ENCODE measurements at regions of chr17 and their contacts with region 1.

Region 1: GRCh38 chr17:12940699-12941098 is 77.1 kb downstream of the ELAC2 start:
- DNase-seq: no peak
- H3K4me3 ChIP-seq: no peak overlapping the region
- H3K27ac ChIP-seq: no peak overlapping the region
- H3K4me1 ChIP-seq: no peaks in the 10 kb centered on the region
- H3K27me3 ChIP-seq: peaks cover 34% of the 10 kb centered on the region
- CTCF ChIP-seq: no peak

Region 2: DNA sequence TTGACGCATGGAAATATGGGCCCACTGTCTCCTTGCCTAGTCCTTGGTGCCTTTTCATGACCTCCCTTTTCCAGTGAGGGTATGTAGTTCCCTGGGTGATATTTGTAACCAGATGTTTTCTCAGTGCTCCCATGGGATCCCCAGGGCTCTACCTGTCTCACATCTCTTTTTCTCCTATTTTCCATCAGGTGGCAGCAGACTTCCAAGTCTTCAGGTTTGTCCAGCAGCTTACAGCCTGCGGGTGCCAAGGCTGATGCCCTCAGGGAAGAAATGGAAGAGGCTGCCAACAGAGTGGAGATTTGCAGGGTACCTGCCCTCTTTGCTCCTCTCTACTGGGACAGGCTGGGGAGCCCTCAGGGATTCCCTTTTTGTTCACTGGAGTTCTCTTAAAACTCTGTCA is 12.0 kb before region 1 on chr17:
- CTCF ChIA-PET with region 1: no interaction called
- POLR2A ChIA-PET with region 1: interaction called, 11 read pairs
- intact Hi-C with region 1: no loop called
- DNase-seq: no peak
- H3K4me3 ChIP-seq: no peak overlapping the region
- H3K27ac ChIP-seq: no peak overlapping the region
- H3K4me1 ChIP-seq: no peaks in the 10 kb centered on the region
- H3K27me3 ChIP-seq: peaks cover 36% of the 10 kb centered on the region; the same call in 1 of the 2 replicates
- CTCF ChIP-seq: no peak; the same call in 1 of the 2 replicates

Region 3: DNA sequence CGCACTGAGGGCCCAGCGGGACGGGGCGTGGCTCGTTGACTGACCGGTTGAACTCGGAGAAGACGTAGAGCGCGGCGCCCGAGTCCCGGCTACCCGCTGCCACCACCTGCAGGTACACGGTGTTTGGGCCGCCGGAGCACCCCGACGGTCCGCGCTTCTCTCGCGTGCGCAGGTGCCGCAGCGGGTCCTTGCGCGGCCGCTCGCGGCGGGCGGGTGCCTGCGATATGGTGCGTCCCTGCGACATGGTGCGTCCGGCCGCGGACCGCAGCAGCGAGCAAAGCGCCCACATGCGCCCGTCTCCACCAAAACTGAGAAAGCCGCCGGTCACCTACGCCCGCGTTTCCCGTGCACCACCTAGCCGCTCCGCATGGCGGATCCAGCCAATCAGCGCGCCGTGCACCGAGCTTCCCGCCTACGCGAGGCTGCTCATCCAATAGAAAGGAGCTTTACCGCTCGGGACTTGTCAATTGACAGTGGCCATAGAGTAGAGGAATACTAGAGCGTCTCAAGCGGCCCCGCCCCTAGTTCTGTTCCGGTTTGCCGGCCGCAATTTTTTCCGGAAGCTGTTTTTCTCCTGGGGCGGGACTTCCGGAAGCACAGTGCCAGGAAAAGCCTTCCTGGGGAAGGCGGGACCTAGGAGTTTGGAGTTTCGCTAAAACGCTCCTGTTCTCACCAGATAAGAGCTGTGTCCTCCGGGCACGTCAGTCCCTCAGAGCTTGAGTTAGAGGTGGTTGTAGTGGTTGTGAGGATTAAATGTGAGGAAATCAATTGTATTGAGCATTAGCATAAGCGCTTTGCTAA is 77.2 kb after region 1 on chr17 and contains the start of gene ELAC2:
- CTCF ChIA-PET with region 1: no interaction called
- POLR2A ChIA-PET with region 1: no interaction called
- intact Hi-C with region 1: no loop called
- DNase-seq: peak; percentile 94 to 97
- H3K4me3 ChIP-seq: peak within 1 kb of the TSS; percentile 90
- H3K27ac ChIP-seq: peak within 1 kb of the TSS; percentile 65
- H3K4me1 ChIP-seq: peaks cover 6% of the 10 kb centered on the region; the same call in 1 of the 2 replicates
- H3K27me3 ChIP-seq: peaks cover 6% of the 10 kb centered on the region
- CTCF ChIP-seq: no peak
- total RNA-seq, gene ELAC2: 58.4 and 62.7 TPM in 2 replicates

Measured in PC-9 (cell line).